Endothelial cell of umbilical vein (primary cell): ENCODE measurements at regions of chr14 and their contacts with region 1.

Region 1: DNA sequence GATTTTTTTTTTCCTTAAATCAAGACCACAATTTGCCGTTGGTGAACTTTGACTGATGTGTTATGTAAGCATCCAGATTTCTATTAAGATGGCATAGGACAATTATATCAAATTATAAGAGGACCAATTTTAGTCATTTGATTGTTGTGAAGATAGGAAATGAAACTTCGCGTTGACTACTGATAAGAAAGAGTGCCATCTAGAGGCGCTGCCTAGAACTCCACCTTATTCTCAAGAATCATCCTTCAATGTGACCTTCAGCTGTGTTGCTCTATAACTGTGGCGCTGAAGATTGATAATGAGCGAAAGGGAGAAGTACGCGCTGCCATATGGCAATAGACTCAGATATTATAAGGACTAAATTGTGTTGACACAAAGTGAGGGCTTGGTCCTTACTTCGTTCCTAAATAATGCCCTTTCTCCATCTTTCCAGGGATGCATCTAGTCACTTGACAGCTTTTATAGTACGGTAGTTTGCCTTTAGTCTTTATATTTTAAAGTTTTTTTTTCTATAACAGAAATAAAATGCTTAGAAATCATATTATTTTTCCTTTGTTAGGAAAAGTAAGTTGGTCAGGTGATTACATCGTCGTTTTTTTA is 350.8 kb upstream of the STXBP6 start:
- DNase-seq: peak; percentile 63
- H3K4me3 ChIP-seq: no peak overlapping the region
- H3K27ac ChIP-seq: no peak overlapping the region
- H3K4me1 ChIP-seq: peaks cover 16% of the 10 kb centered on the region
- H3K27me3 ChIP-seq: no peaks in the 10 kb centered on the region
- CTCF ChIP-seq: peak; percentile 64 to 73
- POLR2A ChIP-seq: no peak

Region 2: GRCh38 chr14:24710403-24711112 is 690.1 kb before region 1 on chr14:
- CTCF ChIA-PET with region 1: interaction called, 7 read pairs
- POLR2A ChIA-PET with region 1: no interaction called
- dilution Hi-C with region 1: no loop called
- intact Hi-C with region 1: loop called (anchors 5 kb)
- DNase-seq: peak; percentile 48
- H3K4me3 ChIP-seq: no peak overlapping the region
- H3K27ac ChIP-seq: no peak overlapping the region
- H3K4me1 ChIP-seq: no peaks in the 10 kb centered on the region
- H3K27me3 ChIP-seq: no peaks in the 10 kb centered on the region
- CTCF ChIP-seq: peak; percentile 67 to 85
- POLR2A ChIP-seq: no peak

Region 3: GRCh38 chr14:25049568-25050268 is 351.0 kb before region 1 on chr14 and contains the start of gene STXBP6:
- CTCF ChIA-PET with region 1: no interaction called
- POLR2A ChIA-PET with region 1: no interaction called
- dilution Hi-C with region 1: no loop called
- intact Hi-C with region 1: loop called (anchors 10 kb)
- DNase-seq: peak; percentile 39
- H3K4me3 ChIP-seq: peak within 1 kb of the TSS; percentile 30 to 42 (median 34)
- H3K27ac ChIP-seq: no peak within 1 kb of the TSS
- H3K4me1 ChIP-seq: no peaks in the 10 kb centered on the region
- H3K27me3 ChIP-seq: peaks cover 42 to 51% of the 10 kb centered on the region in 2 experiments
- CTCF ChIP-seq: no peak
- POLR2A ChIP-seq: no peak
- total RNA-seq, gene STXBP6: not detected in 2 replicates

Region 4: DNA sequence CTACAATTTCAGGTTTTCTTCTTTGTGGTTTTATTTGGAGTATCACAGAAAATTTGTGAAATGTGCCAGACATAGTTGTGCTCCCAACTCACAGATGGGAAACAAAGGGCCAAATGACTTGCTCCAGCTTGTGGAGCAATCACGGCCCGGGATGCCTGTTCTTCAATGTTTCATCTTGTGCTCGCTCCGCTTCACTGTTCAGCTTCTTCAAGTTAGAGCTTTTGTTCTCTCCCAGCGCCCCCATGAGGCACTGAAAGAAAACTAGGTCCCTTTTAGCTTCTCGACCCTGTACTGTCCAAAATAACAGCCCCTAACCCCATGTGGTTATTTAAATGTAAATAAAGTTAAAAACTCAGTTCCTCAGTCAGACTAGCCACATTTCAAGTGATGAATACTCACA is 162.9 kb before region 1 on chr14:
- CTCF ChIA-PET with region 1: interaction called, 3 read pairs
- POLR2A ChIA-PET with region 1: no interaction called
- dilution Hi-C with region 1: no loop called
- intact Hi-C with region 1: loop called (anchors 10 kb)
- DNase-seq: peak; percentile 2
- H3K4me3 ChIP-seq: no peak overlapping the region
- H3K27ac ChIP-seq: no peak overlapping the region
- H3K4me1 ChIP-seq: no peaks in the 10 kb centered on the region
- H3K27me3 ChIP-seq: no peaks in the 10 kb centered on the region
- CTCF ChIP-seq: no peak
- POLR2A ChIP-seq: no peak

Region 5: GRCh38 chr14:25371061-25371460 is 29.6 kb before region 1 on chr14:
- CTCF ChIA-PET with region 1: interaction called, 413 read pairs
- POLR2A ChIA-PET with region 1: no interaction called
- dilution Hi-C with region 1: no loop called
- intact Hi-C with region 1: no loop called
- DNase-seq: no peak
- H3K4me3 ChIP-seq: no peak overlapping the region
- H3K27ac ChIP-seq: no peak overlapping the region
- H3K4me1 ChIP-seq: no peaks in the 10 kb centered on the region
- H3K27me3 ChIP-seq: peaks cover 0 to 2% of the 10 kb centered on the region in 2 experiments
- CTCF ChIP-seq: no peak
- POLR2A ChIP-seq: no peak

Region 6: DNA sequence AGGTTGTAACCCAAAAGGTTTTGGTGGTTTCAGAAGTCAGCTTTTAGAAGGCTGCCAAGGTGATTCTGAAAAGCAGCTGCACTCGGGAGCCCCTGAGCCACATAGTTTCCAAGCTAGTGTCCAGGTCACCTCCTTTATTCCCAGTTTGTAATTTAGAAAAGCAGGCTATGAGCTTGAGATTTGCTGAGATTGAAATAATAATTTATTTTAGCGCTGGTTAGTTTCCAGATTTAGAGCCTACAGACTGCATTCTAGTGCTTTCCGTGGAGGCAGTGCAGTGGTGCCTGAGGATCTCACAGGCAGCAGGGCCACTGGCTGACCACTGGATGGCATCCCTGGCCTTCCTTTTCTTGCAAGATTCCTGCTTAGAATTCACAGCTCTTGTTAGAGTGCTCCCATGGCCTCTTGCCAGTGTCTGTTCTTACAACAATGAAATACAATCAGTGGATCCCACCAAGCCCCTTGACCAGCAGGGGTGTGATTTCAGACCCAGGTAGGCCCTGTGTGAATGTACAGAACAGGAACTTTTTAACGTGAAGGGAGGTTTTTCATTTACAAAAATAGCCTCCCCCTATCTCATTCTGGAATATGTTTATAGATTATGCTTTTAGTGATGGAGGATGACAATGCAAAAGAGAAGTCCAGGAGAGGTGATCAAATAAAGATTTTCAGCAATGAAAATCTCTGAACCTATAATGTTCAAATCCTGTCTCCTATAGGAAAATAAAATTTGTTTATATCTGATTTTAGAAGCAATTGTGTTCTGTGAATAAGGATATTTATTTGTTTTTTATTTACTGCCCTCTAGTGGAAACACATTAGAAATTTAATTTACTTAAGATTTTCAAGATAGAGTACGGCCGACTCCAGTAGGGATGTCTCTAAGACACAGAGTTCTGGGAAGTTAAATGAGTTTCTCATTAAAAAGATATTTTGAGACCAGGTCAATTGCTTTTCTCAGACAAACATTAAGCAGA is 11.4 kb after region 1 on chr14:
- CTCF ChIA-PET with region 1: interaction called, 46 read pairs
- POLR2A ChIA-PET with region 1: no interaction called
- dilution Hi-C with region 1: no loop called
- intact Hi-C with region 1: no loop called
- DNase-seq: no peak
- H3K4me3 ChIP-seq: no peak overlapping the region
- H3K27ac ChIP-seq: no peak overlapping the region
- H3K4me1 ChIP-seq: no peaks in the 10 kb centered on the region
- H3K27me3 ChIP-seq: no peaks in the 10 kb centered on the region
- CTCF ChIP-seq: peak; percentile 5 to 16
- POLR2A ChIP-seq: no peak

Region 7: DNA sequence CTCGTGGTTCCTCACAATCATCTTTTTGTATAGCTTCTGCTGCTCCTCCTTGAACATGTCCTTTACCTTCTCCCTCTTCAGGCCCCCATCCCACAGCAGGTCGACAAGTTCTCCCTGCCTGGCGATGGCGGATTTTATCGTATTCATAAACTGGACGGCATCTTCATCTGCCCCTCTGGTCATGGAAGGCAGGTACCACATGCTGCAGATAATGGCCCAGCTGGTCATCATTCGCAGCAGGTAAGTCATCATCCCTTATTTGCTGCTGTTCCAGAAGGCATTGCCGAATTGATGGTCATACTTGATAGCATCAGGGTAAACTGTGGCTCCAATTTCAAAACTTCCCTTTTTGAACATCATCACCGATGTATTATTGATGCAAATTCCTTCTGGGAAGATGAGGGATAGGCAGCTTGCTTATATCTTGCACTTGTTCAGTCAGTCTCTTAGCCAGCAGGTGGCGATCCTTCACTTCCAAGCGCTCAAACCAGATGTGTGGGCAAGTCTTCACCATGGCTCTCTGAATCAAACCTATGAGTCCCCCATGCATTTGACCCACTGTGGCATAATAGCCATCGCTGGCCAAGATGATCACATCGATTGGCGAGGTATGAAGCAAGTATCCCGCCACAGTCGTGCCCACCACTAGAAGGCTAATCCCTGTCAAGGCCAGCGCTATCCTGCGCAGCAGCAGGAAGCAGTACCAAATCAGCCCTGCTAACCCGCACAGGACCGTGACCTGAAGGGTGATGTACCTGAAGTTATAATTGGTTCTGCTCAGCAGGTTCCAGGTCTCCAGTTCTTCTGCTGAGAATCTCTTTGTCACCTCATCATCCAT is 30.7 kb after region 1 on chr14:
- CTCF ChIA-PET with region 1: no interaction called
- POLR2A ChIA-PET with region 1: no interaction called
- dilution Hi-C with region 1: no loop called
- intact Hi-C with region 1: no loop called
- DNase-seq: no peak
- H3K4me3 ChIP-seq: no peak overlapping the region
- H3K27ac ChIP-seq: no peak overlapping the region
- H3K4me1 ChIP-seq: no peaks in the 10 kb centered on the region
- H3K27me3 ChIP-seq: no peaks in the 10 kb centered on the region
- CTCF ChIP-seq: no peak
- POLR2A ChIP-seq: no peak

Region 8: DNA sequence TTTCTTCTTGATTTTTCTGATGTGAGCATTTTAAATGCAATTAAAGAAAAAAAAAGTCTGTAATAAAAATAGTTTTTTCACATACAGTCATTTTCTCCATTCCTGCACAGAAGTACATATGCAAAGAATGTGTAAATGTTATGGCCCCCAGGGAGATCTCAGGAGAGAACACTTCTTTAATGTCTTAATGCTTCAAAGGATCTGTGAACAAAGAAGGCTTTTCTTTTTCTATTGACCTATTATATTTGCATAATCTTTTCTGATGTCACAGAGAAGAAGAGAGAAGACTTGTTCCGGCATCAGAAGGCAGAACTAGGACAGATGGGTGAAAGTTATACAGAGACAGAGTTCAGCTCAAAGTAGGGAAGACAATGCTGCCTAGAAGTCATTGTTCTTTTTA is 62.8 kb after region 1 on chr14:
- CTCF ChIA-PET with region 1: no interaction called
- POLR2A ChIA-PET with region 1: no interaction called
- dilution Hi-C with region 1: no loop called
- intact Hi-C with region 1: no loop called
- DNase-seq: no peak
- H3K4me3 ChIP-seq: no peak overlapping the region
- H3K27ac ChIP-seq: no peak overlapping the region
- H3K4me1 ChIP-seq: no peaks in the 10 kb centered on the region
- H3K27me3 ChIP-seq: no peaks in the 10 kb centered on the region
- CTCF ChIP-seq: no peak
- POLR2A ChIP-seq: no peak

Region 9: DNA sequence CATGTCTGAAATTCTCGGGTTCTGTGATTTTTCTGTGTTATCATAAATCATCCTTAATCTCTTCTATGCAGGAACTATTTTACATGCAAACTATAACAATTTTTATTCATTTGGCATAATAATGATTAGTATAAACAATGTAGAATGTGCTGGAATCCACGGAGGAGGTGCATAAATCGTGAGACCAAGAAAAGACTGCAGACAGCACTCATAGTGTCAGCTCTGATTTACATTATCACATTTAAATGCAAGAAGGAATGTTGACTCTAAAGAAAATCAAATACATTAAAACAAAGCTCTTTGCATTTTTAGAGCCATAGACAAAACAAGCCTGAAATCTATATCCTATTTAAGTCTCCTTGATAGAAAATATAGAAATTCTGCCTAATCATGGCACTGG is 151.0 kb after region 1 on chr14:
- CTCF ChIA-PET with region 1: no interaction called
- POLR2A ChIA-PET with region 1: no interaction called
- dilution Hi-C with region 1: no loop called
- intact Hi-C with region 1: no loop called
- DNase-seq: no peak
- H3K4me3 ChIP-seq: no peak overlapping the region
- H3K27ac ChIP-seq: no peak overlapping the region
- H3K4me1 ChIP-seq: no peaks in the 10 kb centered on the region
- H3K27me3 ChIP-seq: no peaks in the 10 kb centered on the region
- CTCF ChIP-seq: no peak
- POLR2A ChIP-seq: no peak